ENCODE measurements at regions of chr2 and their contacts with region 1.

Region 1: GRCh38 chr2:65064728-65065552 is 8.7 kb downstream of the CEP68 start:
- DNase-seq: peak; percentile 85 to 89 (median 85)
- ATAC-seq: peak; percentile 82 to 87
- H3K4me3 ChIP-seq: no peak overlapping the region
- H3K27ac ChIP-seq: peak overlapping the region; percentile 78
- H3K4me1 ChIP-seq: peaks cover 35% of the 10 kb centered on the region
- H3K27me3 ChIP-seq: no peaks in the 10 kb centered on the region

Region 2: DNA sequence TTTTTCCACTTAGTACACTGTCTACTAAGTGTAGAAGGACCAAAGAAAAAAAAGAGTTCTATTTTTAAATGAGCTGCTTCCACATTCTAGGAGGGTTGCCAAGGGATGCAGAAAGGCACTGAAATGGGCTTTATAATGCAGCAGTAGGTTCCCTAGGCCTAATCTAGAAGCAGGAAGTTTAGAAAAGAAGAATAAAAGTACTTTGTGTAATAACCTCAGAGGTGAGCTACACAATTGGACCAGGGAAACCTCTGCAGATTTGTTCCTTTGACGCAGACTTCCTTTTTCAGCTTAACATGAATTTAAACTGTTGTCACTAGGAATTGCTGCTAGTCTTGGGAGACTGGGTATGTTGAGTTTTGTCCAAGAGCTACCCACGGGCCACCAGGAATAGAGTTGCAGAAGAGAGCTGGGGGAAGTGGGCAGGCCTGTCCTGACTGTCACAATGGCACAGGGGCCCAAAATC is 99.5 kb after region 1 on chr2:
- intact Hi-C with region 1: loop called in 1 of 4 experiments (anchors 10 kb)
- DNase-seq: no peak
- ATAC-seq: peak; percentile 69 to 82
- H3K4me3 ChIP-seq: no peak overlapping the region
- H3K27ac ChIP-seq: peak overlapping the region; percentile 62
- H3K4me1 ChIP-seq: peaks cover 5% of the 10 kb centered on the region
- H3K27me3 ChIP-seq: no peaks in the 10 kb centered on the region

Region 3: GRCh38 chr2:65169760-65170136 is 104.8 kb after region 1 on chr2:
- intact Hi-C with region 1: loop called in 2 of 4 experiments (anchors 5 to 10 kb)
- DNase-seq: no peak
- ATAC-seq: no peak
- H3K4me3 ChIP-seq: no peak overlapping the region
- H3K27ac ChIP-seq: no peak overlapping the region
- H3K4me1 ChIP-seq: peaks cover under 1% of the 10 kb centered on the region
- H3K27me3 ChIP-seq: no peaks in the 10 kb centered on the region

Region 4: GRCh38 chr2:65256054-65256453 is 191.1 kb after region 1 on chr2:
- intact Hi-C with region 1: no loop called
- DNase-seq: no peak
- ATAC-seq: no peak
- H3K4me3 ChIP-seq: no peak overlapping the region
- H3K27ac ChIP-seq: no peak overlapping the region
- H3K4me1 ChIP-seq: no peaks in the 10 kb centered on the region
- H3K27me3 ChIP-seq: no peaks in the 10 kb centered on the region

Measured in right cardiac atrium (tissue), 5 donors.